CD4-positive, alpha-beta T cell (primary cell): ENCODE measurements at regions of chr12 and their contacts with region 1.

Region 1: GRCh38 chr12:104108755-104109445 is 29.1 kb downstream of the NFYB start:
- DNase-seq: peak; percentile 77 to 92 (median 84)
- ATAC-seq: peak; percentile 100
- H3K4me3 ChIP-seq: no peak overlapping the region
- H3K4me3 Mint-ChIP-seq: peak overlapping the region; percentile 59
- H3K27ac ChIP-seq: no peak overlapping the region
- H3K27ac Mint-ChIP-seq: peak overlapping the region; percentile 24
- H3K4me1 ChIP-seq: no peaks in the 10 kb centered on the region
- H3K4me1 Mint-ChIP-seq: peaks cover 14% of the 10 kb centered on the region
- H3K27me3 ChIP-seq: no peaks in the 10 kb centered on the region
- H3K27me3 Mint-ChIP-seq: no peaks in the 10 kb centered on the region
- CTCF ChIP-seq: peak; percentile 89

Region 2: DNA sequence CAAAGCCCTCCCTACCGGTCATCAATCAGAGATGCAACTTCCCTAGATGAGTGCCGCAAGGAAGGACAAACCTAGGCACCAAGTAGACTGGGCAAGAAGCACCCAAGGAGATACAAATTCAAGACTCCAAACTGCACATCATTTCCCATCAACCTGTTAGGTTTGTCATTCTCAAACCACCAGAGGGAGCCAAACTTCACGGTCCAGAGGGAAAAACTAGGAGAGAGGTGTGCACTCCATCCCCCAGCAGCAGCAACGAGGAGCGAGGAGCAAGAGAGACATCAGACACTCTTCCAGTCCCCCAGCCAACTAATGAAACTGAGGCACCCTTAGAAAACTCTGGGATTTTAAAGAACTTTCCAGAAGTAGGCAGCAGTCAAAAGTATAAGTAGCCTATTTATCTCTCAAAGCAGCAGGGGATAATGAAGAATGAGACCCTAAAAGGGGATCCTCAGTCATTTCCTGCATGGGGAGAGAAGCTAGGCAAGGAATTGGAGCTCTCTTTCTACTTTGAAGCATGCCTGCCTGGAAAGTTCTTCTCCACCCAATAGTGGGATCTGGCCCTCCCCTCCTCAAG is 230.9 kb before region 1 on chr12:
- CTCF ChIA-PET with region 1: interaction called, 9 read pairs
- POLR2A ChIA-PET with region 1: interaction called, 3 read pairs
- intact Hi-C with region 1: loop called (anchors 1 kb)
- DNase-seq: peak; percentile 14 to 80 (median 38)
- ATAC-seq: peak; percentile 76
- H3K4me3 ChIP-seq: no peak overlapping the region
- H3K4me3 Mint-ChIP-seq: no peak overlapping the region
- H3K27ac ChIP-seq: no peak overlapping the region
- H3K27ac Mint-ChIP-seq: no peak overlapping the region
- H3K4me1 ChIP-seq: peaks cover 7% of the 10 kb centered on the region
- H3K4me1 Mint-ChIP-seq: peaks cover 5% of the 10 kb centered on the region
- H3K27me3 ChIP-seq: no peaks in the 10 kb centered on the region
- H3K27me3 Mint-ChIP-seq: no peaks in the 10 kb centered on the region
- CTCF ChIP-seq: peak; percentile 79

Region 3: GRCh38 chr12:103884316-103884715 is 224.6 kb before region 1 on chr12:
- CTCF ChIA-PET with region 1: interaction called, 9 read pairs
- POLR2A ChIA-PET with region 1: interaction called, 6 read pairs
- intact Hi-C with region 1: loop called in 1 of 2 experiments (anchors 1 kb)
- DNase-seq: peak; percentile 17 to 75 (median 37)
- ATAC-seq: peak; percentile 78
- H3K4me3 ChIP-seq: no peak overlapping the region
- H3K4me3 Mint-ChIP-seq: no peak overlapping the region
- H3K27ac ChIP-seq: no peak overlapping the region
- H3K27ac Mint-ChIP-seq: no peak overlapping the region
- H3K4me1 ChIP-seq: peaks cover 2% of the 10 kb centered on the region
- H3K4me1 Mint-ChIP-seq: peaks cover 6% of the 10 kb centered on the region
- H3K27me3 ChIP-seq: no peaks in the 10 kb centered on the region
- H3K27me3 Mint-ChIP-seq: no peaks in the 10 kb centered on the region
- CTCF ChIP-seq: peak; percentile 75

Region 4: DNA sequence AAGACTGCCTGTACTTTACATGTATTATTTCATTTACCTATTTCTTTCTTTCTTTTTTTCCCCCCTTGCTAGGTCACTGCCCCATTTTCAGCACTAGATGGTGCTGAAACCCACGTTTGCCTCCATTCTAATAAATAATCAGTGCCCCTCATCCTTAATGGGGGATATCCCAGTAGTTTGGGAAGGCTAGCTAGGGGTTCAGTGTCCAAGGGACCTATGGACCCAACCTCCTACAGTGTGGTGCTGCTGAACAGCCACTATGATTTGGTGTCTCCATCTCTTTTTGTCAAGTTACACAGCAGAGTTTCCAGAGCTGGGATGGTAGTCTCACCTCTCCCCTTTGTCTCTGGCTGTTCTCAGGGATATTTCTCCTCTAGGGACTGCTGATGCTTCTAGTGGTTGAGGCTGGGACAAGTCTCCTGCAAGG is 51.1 kb before region 1 on chr12:
- CTCF ChIA-PET with region 1: interaction called, 18 read pairs
- POLR2A ChIA-PET with region 1: interaction called, 7 read pairs
- intact Hi-C with region 1: loop called (anchors 1 kb)
- DNase-seq: peak in 4 of 14 experiments; percentile 15 to 43 (median 36)
- ATAC-seq: peak; percentile 60
- H3K4me3 ChIP-seq: no peak overlapping the region
- H3K4me3 Mint-ChIP-seq: no peak overlapping the region
- H3K27ac ChIP-seq: no peak overlapping the region
- H3K27ac Mint-ChIP-seq: no peak overlapping the region
- H3K4me1 ChIP-seq: no peaks in the 10 kb centered on the region
- H3K4me1 Mint-ChIP-seq: no peaks in the 10 kb centered on the region
- H3K27me3 ChIP-seq: peaks cover 5 to 7% of the 10 kb centered on the region in 2 experiments
- H3K27me3 Mint-ChIP-seq: peaks cover 43% of the 10 kb centered on the region
- CTCF ChIP-seq: peak; percentile 70

Region 5: DNA sequence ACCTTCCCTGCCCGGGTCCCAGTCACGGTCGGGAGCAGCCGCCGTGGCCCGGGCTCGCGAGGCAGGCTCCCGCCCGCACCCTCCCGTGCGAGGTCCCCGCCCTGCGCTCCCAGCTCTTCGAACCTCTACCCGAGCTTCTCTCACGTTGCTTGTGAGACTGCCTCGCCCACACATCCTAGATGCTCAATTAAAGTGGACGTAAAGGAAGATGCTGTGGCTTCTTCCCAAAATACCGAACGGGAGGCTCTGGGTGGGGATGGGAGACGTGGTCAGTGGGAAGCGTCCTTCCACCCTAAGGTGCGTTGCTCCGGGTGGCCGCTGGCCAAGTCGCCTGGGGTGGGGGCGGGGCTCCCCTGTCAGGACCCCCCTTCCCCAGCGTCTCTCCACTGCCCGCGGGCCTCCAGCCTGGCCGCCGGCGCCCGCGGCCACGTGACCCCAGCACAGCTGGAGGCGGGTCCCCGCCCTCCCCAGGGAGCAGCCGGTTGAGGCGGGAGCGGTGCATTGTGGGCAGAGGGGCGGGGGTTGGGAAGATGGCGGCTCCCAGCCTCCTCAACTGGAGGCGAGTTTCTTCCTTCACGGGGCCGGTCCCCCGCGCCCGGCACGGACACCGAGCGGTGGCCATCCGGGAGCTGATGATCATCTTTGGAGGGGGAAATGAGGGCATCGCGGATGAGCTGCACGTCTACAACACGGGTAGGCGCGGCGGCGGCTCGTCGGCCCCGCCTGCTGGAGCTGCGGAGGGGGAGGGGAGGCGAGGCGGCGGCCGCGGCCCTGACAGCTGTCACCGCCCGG is 44.7 kb before region 1 on chr12 and contains the start of gene HCFC2:
- CTCF ChIA-PET with region 1: interaction called, 18 read pairs
- POLR2A ChIA-PET with region 1: interaction called, 17 read pairs
- intact Hi-C with region 1: no loop called
- DNase-seq: peak; percentile 74 to 93 (median 85)
- ATAC-seq: peak; percentile 92
- H3K4me3 ChIP-seq: peak within 1 kb of the TSS; percentile 85
- H3K4me3 Mint-ChIP-seq: peak within 1 kb of the TSS; percentile 95
- H3K27ac ChIP-seq: peak within 1 kb of the TSS; percentile 42 to 59
- H3K27ac Mint-ChIP-seq: peak within 1 kb of the TSS; percentile 82
- H3K4me1 ChIP-seq: peaks cover 17% of the 10 kb centered on the region
- H3K4me1 Mint-ChIP-seq: peaks cover 33% of the 10 kb centered on the region
- H3K27me3 ChIP-seq: peaks cover 0 to 2% of the 10 kb centered on the region in 2 experiments
- H3K27me3 Mint-ChIP-seq: peaks cover 10% of the 10 kb centered on the region
- CTCF ChIP-seq: no peak
- total RNA-seq, gene HCFC2: 11.2 to 15.1 TPM